HepG2 (cell line): ENCODE measurements at regions of chr12 and their contacts with region 1.

Region 1: DNA sequence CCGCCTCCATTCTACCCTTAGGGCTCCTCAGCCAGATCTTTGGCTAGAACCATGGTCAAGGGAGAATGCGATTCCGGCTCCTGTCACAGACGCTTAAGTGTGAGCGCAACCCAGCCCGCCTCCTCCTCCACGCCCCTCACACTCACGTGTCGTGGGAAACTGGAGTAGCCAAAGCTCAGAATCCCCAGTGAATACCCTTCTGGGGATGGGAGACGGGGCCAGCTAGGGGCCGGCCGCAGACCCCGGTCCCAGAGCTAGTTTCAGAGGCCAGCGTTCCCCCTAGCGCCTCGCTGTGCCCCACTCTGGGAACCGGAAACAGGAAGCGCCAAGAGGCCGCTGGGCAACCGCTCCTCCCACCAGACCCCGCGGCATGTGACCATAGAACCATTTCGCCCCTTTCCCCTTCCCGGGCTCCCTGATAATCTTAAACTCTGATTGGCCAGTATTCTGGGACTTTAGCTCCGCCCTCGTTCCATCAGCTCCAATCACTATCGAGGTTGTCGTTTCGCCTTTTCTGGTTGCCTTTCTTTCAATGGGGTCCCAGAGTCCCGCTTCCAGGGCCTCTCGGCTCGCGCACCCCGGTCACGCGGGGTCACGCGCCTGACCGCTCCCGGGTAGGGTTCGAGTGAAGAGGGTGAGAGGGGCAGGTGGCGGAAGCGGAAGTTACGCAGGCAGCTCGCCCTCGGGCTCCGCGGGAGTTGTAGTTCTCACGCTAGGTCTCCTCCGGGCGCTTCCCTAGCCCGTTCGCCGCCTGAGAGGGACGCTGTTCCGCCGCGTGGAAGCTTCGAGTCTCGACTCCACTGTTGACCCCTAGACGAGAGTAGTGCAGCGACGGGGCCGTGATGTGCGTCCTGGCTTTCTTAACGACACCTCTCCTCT is at the start of gene M6PR:
- DNase-seq: peak; percentile 97
- ATAC-seq: peak; percentile 95
- H3K4me3 ChIP-seq: peak within 1 kb of the TSS; percentile 81 to 89 (median 86)
- H3K27ac ChIP-seq: peak within 1 kb of the TSS; percentile 93
- H3K4me1 ChIP-seq: peaks cover 30% of the 10 kb centered on the region
- H3K27me3 ChIP-seq: no peaks in the 10 kb centered on the region; a peak in 1 of 5 replicates
- CTCF ChIP-seq: peak; percentile 93
- EP300 ChIP-seq: peak in 1 of 2 experiments; percentile 11; a peak in 1 of 4 replicates
- POLR2A ChIP-seq: peak; percentile 78 to 88
- RAD21 ChIP-seq: peak; percentile 74
- total RNA-seq, gene M6PR: 68.5 and 127 TPM in 2 replicates

Region 2: DNA sequence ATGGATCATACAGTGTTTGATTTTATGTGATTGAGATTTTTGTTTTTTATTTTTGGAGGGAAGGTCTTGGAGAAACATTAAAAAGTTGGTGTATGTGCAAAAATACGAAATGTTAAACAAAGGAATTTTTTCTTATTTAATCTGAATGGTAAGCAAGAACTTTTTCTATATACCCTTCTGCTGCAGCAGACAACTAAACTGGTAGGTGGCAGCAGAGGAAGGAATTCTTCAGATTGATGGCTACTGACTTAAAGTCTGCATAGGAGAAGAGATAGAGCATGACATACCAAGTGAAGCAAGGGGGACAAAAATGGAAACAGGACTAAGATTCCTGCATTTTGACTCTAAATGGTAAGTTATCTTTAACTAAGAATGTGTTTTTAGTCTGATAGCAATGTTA is 169.2 kb before region 1 on chr12:
- CTCF ChIA-PET with region 1: no interaction called
- POLR2A ChIA-PET with region 1: no interaction called
- in situ Hi-C with region 1: no loop called
- intact Hi-C with region 1: no loop called
- DNase-seq: peak; percentile 16
- ATAC-seq: peak; percentile 46; the same call in 1 of the 3 replicates
- H3K4me3 ChIP-seq: no peak overlapping the region
- H3K27ac ChIP-seq: no peak overlapping the region
- H3K4me1 ChIP-seq: no peaks in the 10 kb centered on the region
- H3K27me3 ChIP-seq: no peaks in the 10 kb centered on the region
- CTCF ChIP-seq: 0 out of 2 replicates have a peak, but pooled peaks have one; percentile 15
- EP300 ChIP-seq: no peak
- POLR2A ChIP-seq: no peak
- RAD21 ChIP-seq: no peak

Region 3: DNA sequence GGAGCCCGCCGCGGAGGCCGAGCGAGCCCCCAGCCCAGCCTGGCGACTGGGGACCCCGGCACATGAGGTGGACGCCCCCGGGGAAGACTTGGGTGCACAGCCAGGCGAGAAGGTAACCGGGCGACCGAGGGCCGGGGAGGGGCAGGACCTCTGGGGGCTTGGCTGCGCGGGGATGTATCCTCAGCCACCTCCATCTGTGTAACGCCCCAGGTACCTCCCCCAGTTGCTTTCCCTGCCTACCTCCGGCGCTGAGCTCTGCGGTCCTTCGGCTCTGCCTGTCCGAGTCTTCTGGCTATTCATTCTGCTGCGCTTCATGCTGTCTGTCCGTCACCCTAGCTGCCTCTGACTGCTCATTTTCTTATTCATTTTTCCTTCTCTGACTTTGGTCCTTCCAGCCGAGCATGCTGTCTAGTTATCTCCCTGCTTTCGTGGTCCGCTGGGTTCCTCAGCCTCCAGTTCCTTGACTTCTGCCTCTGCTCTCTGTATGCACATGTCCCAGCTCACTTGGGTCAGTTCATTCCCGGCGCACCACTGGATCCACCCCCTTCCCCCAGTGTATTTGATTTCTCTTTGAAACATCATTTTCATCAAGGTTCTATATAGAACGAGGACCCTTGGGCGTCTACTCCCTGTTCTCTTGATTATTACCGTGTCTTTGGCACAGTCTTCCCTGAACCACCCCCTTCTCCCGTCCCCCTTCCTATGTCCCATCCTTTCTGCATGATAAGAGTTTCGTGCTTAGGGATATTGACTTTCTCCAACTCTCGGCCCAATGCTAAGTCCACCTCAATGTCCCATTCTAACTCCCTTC is 34.7 kb before region 1 on chr12:
- CTCF ChIA-PET with region 1: no interaction called
- POLR2A ChIA-PET with region 1: interaction called, 16 read pairs
- in situ Hi-C with region 1: no loop called
- intact Hi-C with region 1: loop called (anchors 5 kb)
- DNase-seq: peak; percentile 24
- ATAC-seq: peak; percentile 90
- H3K4me3 ChIP-seq: peak overlapping the region; percentile 76 to 96 (median 79)
- H3K27ac ChIP-seq: no peak overlapping the region
- H3K4me1 ChIP-seq: peaks cover 27% of the 10 kb centered on the region
- H3K27me3 ChIP-seq: no peaks in the 10 kb centered on the region; a peak in 1 of 5 replicates
- CTCF ChIP-seq: no peak
- EP300 ChIP-seq: no peak
- POLR2A ChIP-seq: no peak
- RAD21 ChIP-seq: no peak

Region 4: DNA sequence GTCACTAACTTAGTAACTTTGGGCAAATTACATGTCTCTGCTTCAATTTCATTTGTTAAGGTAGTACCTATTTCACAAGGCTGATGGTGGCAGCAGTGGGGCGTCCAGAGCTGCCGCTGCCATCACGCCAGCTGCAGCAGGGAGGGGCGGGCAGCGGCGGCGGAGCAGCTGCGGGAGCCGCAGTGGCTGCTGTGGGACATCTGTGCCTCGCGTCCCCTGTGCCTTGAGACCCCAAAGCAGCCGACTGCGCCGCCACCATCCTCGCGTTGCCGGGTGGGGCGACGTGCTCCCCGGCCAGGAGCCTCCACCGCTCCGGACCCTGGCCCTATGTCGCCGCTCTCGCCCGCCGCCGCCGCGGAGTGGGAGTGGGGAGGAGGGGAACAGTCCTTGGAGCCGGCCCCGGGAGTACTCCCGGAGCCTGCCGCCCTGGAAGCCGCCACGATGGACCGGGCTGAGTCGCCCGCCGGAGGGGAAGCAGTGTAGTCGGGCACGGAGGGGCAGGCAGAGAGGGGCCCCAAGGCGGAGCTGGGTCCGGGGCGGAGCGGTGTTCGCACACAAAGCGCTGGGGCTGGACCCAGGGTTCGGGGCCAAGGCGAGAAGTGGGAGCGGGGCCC is 114.7 kb after region 1 on chr12:
- CTCF ChIA-PET with region 1: no interaction called
- POLR2A ChIA-PET with region 1: interaction called, 27 read pairs
- in situ Hi-C with region 1: no loop called
- intact Hi-C with region 1: no loop called
- DNase-seq: peak; percentile 65
- ATAC-seq: peak; percentile 42
- H3K4me3 ChIP-seq: peak overlapping the region; percentile 84 to 90 (median 89)
- H3K27ac ChIP-seq: peak overlapping the region; percentile 95
- H3K4me1 ChIP-seq: peaks cover 44% of the 10 kb centered on the region
- H3K27me3 ChIP-seq: no peaks in the 10 kb centered on the region; a peak in 1 of 5 replicates
- CTCF ChIP-seq: peak; percentile 81
- EP300 ChIP-seq: no peak
- POLR2A ChIP-seq: peak; percentile 13 to 35; a peak in 1 of 4 replicates
- RAD21 ChIP-seq: peak; percentile 54